ENCODE measurements at regions of chr1 and their contacts with region 1.

Region 1: DNA sequence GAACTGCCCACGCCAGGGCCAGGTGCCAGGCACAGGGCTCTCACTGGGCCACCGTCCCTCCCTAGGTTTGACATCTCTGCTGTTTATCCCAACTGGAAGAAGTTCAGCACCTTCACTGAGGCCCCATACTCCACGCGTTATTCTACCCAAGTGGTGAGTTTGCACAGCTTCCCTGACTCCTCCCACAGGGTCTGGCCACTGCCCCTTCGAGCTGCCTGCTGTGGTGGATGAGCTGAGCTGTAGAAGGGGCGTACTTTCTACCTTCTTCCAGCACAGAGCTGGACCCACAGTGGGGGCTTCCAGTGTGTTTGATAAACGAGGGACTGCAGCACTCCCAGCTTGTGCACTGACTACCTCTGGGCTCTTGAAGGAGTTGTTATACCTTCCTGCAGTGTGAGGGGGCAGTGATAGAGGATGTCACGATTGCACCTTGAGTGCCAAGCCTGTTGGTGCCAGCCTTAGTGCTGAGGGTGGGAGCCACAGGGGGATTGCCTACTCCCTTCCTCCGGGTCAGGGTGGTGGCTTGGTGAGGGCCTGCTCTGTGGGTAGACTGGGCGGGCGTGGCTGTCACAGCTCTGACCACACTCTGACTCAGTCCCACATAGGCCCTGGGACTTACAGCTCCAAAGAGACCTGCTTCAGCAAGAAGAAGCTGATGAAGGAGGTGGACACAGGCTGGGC is 5.9 kb upstream of the TTC22 start:
- DNase-seq: no peak
- H3K4me3 ChIP-seq: no peak overlapping the region
- H3K27ac ChIP-seq: no peak overlapping the region
- H3K4me1 ChIP-seq: no peaks in the 10 kb centered on the region
- H3K27me3 ChIP-seq: no peaks in the 10 kb centered on the region
- CTCF ChIP-seq: no peak
- POLR2A ChIP-seq: no peak

Region 2: DNA sequence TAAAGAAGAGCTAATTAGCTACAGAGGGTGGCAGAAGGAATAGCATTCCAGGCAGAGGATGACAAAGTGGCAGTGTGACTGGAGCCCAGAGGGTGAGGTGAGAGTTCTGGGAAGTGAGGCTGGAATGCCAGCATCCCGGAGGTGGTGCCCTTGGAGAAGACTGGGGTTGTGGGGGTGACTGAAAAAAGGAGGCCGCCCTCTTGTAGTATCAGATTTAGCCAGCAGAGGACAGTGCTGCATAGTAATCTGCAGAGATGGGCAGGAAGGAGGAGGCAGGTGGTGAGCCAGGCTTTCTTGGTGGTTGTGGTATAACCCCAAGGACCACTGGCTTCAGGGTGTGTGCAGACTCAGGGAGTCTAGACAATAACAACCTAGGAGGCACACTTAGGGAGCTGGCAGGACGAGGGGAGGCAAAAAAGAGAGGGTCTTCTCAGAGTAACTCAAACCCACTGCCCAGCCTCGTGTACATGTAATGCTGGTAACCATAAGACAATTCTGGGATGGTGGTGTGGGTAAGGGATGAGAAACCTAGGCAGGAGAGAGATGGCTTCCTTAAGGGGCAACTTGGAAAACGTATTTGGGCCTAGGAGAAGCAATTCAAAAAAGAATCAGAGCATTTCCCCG is 135.0 kb before region 1 on chr1:
- intact Hi-C with region 1: loop called (anchors 5 kb)
- DNase-seq: no peak
- H3K4me3 ChIP-seq: no peak overlapping the region
- H3K27ac ChIP-seq: no peak overlapping the region
- H3K4me1 ChIP-seq: no peaks in the 10 kb centered on the region
- H3K27me3 ChIP-seq: no peaks in the 10 kb centered on the region
- CTCF ChIP-seq: peak; percentile 28 to 75 (median 74)
- POLR2A ChIP-seq: no peak